ENCODE measurements at regions of chr15 and their contacts with region 1.

Region 1: GRCh38 chr15:38563723-38564519 is 693 bp downstream of the RASGRP1 start:
- DNase-seq: peak; percentile 50
- H3K4me3 Mint-ChIP-seq: peak overlapping the region; percentile 60
- H3K27ac Mint-ChIP-seq: no peak overlapping the region
- H3K4me1 Mint-ChIP-seq: no peaks in the 10 kb centered on the region
- H3K27me3 Mint-ChIP-seq: peaks cover 11% of the 10 kb centered on the region
- CTCF ChIP-seq: peak; percentile 71

Region 2: GRCh38 chr15:38440353-38441129 is 123.4 kb before region 1 on chr15:
- CTCF ChIA-PET with region 1: interaction called, 12 read pairs
- POLR2A ChIA-PET with region 1: no interaction called
- intact Hi-C with region 1: no loop called
- DNase-seq: peak; percentile 71
- H3K4me3 Mint-ChIP-seq: no peak overlapping the region
- H3K27ac Mint-ChIP-seq: no peak overlapping the region
- H3K4me1 Mint-ChIP-seq: peaks cover 6% of the 10 kb centered on the region
- H3K27me3 Mint-ChIP-seq: peaks cover 47% of the 10 kb centered on the region
- CTCF ChIP-seq: peak; percentile 89

Region 3: GRCh38 chr15:38576837-38577236 is 12.9 kb after region 1 on chr15:
- CTCF ChIA-PET with region 1: interaction called, 16 read pairs
- POLR2A ChIA-PET with region 1: no interaction called
- intact Hi-C with region 1: no loop called
- DNase-seq: no peak
- H3K4me3 Mint-ChIP-seq: no peak overlapping the region
- H3K27ac Mint-ChIP-seq: no peak overlapping the region
- H3K4me1 Mint-ChIP-seq: no peaks in the 10 kb centered on the region
- H3K27me3 Mint-ChIP-seq: peaks cover 24% of the 10 kb centered on the region
- CTCF ChIP-seq: no peak

Region 4: DNA sequence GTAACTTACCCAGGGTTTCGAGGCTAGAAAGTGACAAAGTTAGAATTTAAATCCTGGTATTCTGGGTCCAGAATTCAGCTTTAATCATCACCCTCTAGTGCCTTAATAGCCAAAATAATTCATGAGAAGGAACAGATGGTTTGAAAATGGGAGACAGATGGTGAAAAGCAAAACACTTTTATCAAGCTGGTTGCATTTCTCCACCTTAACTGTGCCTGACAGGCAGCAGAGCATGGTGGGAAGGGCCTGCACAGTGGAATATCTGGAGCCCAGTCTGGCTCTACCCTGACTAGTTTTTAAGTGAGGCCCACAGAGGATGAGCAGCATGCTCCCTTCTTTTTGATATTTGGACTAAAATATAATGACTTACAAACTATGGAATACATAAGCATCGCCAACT is 36.3 kb after region 1 on chr15:
- CTCF ChIA-PET with region 1: interaction called, 13 read pairs
- POLR2A ChIA-PET with region 1: no interaction called
- intact Hi-C with region 1: no loop called
- DNase-seq: no peak
- H3K4me3 Mint-ChIP-seq: no peak overlapping the region
- H3K27ac Mint-ChIP-seq: no peak overlapping the region
- H3K4me1 Mint-ChIP-seq: no peaks in the 10 kb centered on the region
- H3K27me3 Mint-ChIP-seq: peaks cover 10% of the 10 kb centered on the region
- CTCF ChIP-seq: no peak

Region 5: GRCh38 chr15:38660738-38661137 is 96.8 kb after region 1 on chr15:
- CTCF ChIA-PET with region 1: interaction called, 11 read pairs
- POLR2A ChIA-PET with region 1: no interaction called
- intact Hi-C with region 1: no loop called
- DNase-seq: no peak
- H3K4me3 Mint-ChIP-seq: no peak overlapping the region
- H3K27ac Mint-ChIP-seq: no peak overlapping the region
- H3K4me1 Mint-ChIP-seq: no peaks in the 10 kb centered on the region
- H3K27me3 Mint-ChIP-seq: peaks cover 16% of the 10 kb centered on the region
- CTCF ChIP-seq: no peak

Region 6: DNA sequence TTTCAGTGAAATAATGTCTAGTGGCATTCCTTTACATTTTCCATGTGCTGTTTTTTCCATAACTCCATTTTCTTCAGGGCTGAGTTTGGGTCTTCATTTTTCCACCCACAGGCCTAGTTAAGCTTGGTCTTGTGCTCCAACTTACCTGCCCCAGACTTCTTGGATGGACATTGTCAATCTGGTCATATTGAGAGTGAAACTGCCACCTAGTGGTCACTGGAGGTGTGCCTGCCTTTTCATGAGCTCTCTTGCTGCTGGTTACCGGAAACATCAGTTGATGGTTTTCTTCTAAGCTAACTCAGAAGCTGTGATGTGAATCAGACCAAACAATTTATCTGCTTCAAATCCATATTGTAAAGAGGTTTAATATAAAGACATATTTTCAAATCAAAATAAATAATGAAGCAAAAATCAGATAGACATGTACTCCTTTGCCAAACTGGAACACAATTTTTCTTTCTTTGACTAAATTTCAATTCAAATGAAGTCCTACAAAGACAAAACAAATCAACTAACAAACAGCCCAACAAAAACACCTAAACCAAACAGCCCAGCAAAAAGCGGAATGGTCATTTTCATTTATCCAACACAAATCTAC is 135.8 kb after region 1 on chr15:
- CTCF ChIA-PET with region 1: interaction called, 11 read pairs
- POLR2A ChIA-PET with region 1: no interaction called
- intact Hi-C with region 1: no loop called
- DNase-seq: peak; percentile 72
- H3K4me3 Mint-ChIP-seq: no peak overlapping the region
- H3K27ac Mint-ChIP-seq: no peak overlapping the region
- H3K4me1 Mint-ChIP-seq: no peaks in the 10 kb centered on the region
- H3K27me3 Mint-ChIP-seq: no peaks in the 10 kb centered on the region
- CTCF ChIP-seq: peak; percentile 68

Measured in MCF 10A (cell line).